Right cardiac atrium (tissue), 5 donors: ENCODE measurements at regions of chr7 and their contacts with region 1.

Region 1: GRCh38 chr7:4830176-4830575 is 31.7 kb downstream of the PAPOLB start:
- DNase-seq: peak; percentile 81 to 92 (median 91)
- ATAC-seq: peak; percentile 79 to 89
- H3K4me3 ChIP-seq: no peak overlapping the region
- H3K27ac ChIP-seq: no peak overlapping the region
- H3K4me1 ChIP-seq: no peaks in the 10 kb centered on the region
- H3K27me3 ChIP-seq: no peaks in the 10 kb centered on the region

Region 2: DNA sequence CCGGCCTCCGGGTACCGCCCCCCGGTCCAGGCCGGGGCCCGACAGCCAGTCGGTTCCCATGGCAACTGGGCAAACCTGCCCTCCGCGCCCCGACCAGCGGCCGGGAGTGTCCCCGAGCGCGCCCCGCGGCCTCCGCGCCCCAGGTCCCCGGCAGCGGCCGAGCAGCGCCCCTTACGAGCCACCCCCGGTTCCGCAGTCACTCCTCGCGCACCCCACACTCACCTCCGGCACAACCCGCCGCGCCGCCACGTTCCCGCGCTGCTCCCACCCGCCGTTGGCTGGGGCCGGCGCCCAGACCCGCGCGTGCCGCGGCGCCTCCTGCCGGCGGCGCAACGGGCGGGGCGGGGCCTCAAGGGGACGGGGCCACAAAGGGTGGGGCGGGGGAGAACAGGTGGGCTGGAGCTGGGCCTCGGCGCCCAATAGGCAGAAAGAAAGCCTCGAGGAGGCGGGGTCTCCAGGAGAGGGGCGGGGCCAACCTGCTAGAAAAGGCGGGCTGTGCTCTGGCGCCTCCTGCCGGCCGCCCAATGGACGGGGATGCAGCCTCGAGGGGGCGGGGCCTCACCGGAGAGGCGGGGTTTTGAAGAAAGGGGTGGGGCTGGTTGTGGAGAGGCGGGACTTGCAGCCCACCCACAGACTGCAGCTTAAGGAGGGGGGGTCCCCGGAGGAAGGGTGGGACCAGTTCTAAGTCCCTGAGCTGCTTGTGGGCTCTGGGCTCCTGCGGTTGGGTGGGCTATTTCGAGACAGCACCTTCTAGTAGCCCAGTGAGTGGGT is 53.4 kb after region 1 on chr7 and contains the start of gene RADIL:
- intact Hi-C with region 1: loop called in 3 of 4 experiments (anchors 5 to 10 kb)
- DNase-seq: peak; percentile 97 to 99 (median 99)
- ATAC-seq: peak; percentile 92 to 95
- H3K4me3 ChIP-seq: peak within 1 kb of the TSS; percentile 82
- H3K27ac ChIP-seq: peak within 1 kb of the TSS; percentile 84
- H3K4me1 ChIP-seq: no peaks in the 10 kb centered on the region
- H3K27me3 ChIP-seq: no peaks in the 10 kb centered on the region
- total RNA-seq, gene RADIL: 6.9 to 12.0 (median 9.4) TPM

Region 3: GRCh38 chr7:5083311-5083711 is 253.1 kb after region 1 on chr7:
- intact Hi-C with region 1: loop called in 2 of 4 experiments (anchors 10 kb)
- DNase-seq: no peak
- ATAC-seq: no peak
- H3K4me3 ChIP-seq: no peak overlapping the region
- H3K27ac ChIP-seq: no peak overlapping the region
- H3K4me1 ChIP-seq: no peaks in the 10 kb centered on the region
- H3K27me3 ChIP-seq: no peaks in the 10 kb centered on the region